H1 (cell line): ENCODE measurements at regions of chr3 and their contacts with region 1.

Region 1: DNA sequence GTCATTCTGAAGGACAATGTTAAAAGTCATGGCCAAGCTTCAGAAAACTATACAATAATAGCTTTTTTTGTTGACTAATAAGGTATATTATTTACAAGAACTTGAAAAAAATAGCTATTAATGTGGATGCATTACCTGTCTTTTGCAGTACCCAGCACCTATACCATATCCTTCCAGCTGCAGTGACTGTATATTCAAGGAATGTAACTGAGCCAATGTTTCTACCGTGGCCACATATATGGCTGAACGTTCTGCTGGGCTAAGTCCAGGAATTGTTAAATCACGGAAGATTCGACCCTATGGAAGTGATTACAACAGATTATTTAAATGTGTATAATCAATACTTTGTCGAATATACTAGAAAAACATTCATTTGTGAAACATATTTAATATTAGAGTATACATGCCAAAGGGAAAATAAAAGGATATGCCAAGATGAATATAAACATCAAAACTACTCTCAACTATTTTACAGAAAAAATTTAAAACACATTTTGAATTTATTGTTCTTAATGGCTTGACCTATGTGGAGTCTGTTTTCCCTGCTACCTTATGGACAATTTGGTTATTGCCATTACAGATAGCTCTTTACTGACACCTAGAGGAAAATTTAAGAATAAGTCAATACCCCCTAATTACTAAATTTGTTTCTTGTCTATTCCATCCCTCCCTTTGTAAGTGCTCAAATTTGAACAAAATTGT is 17.6 kb downstream of the ACAD11 start:
- DNase-seq: no peak
- H3K4me3 ChIP-seq: no peak overlapping the region
- H3K27ac ChIP-seq: no peak overlapping the region
- H3K4me1 ChIP-seq: no peaks in the 10 kb centered on the region
- H3K27me3 ChIP-seq: no peaks in the 10 kb centered on the region
- CTCF ChIP-seq: peak in 2 of 3 experiments; percentile 43 to 50; a peak in 2 of 4 replicates
- EP300 ChIP-seq: no peak
- POLR2A ChIP-seq: no peak
- RAD21 ChIP-seq: peak; percentile 67 to 73

Region 2: GRCh38 chr3:132535575-132536441 is 106.2 kb before region 1 on chr3:
- CTCF ChIA-PET with region 1: interaction called, 163 read pairs
- POLR2A ChIA-PET with region 1: interaction called, 3 read pairs
- DNase-seq: peak; percentile 17 to 67
- H3K4me3 ChIP-seq: no peak overlapping the region
- H3K27ac ChIP-seq: no peak overlapping the region
- H3K4me1 ChIP-seq: no peaks in the 10 kb centered on the region
- H3K27me3 ChIP-seq: no peaks in the 10 kb centered on the region
- CTCF ChIP-seq: peak in 2 of 3 experiments; percentile 65 to 66; a peak in 3 of 4 replicates
- EP300 ChIP-seq: no peak
- POLR2A ChIP-seq: no peak
- RAD21 ChIP-seq: peak; percentile 69 to 70

Region 3: GRCh38 chr3:132549890-132550578 is 92.0 kb before region 1 on chr3:
- CTCF ChIA-PET with region 1: interaction called, 30 read pairs
- POLR2A ChIA-PET with region 1: no interaction called
- DNase-seq: no peak
- H3K4me3 ChIP-seq: no peak overlapping the region
- H3K27ac ChIP-seq: no peak overlapping the region
- H3K4me1 ChIP-seq: peaks cover 0 to 12% (median 3%) of the 10 kb centered on the region in 4 experiments; a peak in 3 of 7 replicates
- H3K27me3 ChIP-seq: no peaks in the 10 kb centered on the region
- CTCF ChIP-seq: no peak
- EP300 ChIP-seq: no peak
- POLR2A ChIP-seq: no peak
- RAD21 ChIP-seq: no peak

Region 4: DNA sequence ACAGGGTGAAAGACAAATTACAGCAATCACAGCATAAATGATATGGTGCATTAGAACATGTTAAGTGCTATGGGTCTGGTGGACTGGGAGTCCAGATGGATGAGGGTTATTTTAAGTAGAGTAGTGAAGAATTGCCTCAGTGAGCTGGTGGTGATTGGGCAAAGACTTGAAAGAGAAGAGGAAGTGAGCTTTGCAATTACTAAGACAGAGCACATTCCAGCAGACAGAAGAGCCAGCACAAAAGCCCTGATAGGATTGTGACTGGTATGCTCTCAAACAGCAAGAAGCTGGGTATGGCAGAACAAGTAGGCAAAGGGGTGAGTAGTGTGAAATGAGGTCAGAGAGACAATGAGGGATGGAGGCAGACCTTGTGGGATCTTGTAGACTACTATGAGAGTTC is 47.0 kb before region 1 on chr3:
- CTCF ChIA-PET with region 1: interaction called, 12 read pairs
- POLR2A ChIA-PET with region 1: no interaction called
- DNase-seq: no peak
- H3K4me3 ChIP-seq: no peak overlapping the region
- H3K27ac ChIP-seq: no peak overlapping the region
- H3K4me1 ChIP-seq: no peaks in the 10 kb centered on the region; a peak in 1 of 7 replicates
- H3K27me3 ChIP-seq: no peaks in the 10 kb centered on the region
- CTCF ChIP-seq: no peak
- EP300 ChIP-seq: no peak
- POLR2A ChIP-seq: no peak
- RAD21 ChIP-seq: no peak

Region 5: GRCh38 chr3:132629928-132630327 is 12.1 kb before region 1 on chr3:
- CTCF ChIA-PET with region 1: interaction called, 19 read pairs
- POLR2A ChIA-PET with region 1: no interaction called
- DNase-seq: no peak
- H3K4me3 ChIP-seq: no peak overlapping the region
- H3K27ac ChIP-seq: no peak overlapping the region
- H3K4me1 ChIP-seq: no peaks in the 10 kb centered on the region
- H3K27me3 ChIP-seq: no peaks in the 10 kb centered on the region
- CTCF ChIP-seq: no peak
- EP300 ChIP-seq: no peak
- POLR2A ChIP-seq: no peak
- RAD21 ChIP-seq: no peak

Region 6: GRCh38 chr3:132652640-132653270 is 10.8 kb after region 1 on chr3:
- CTCF ChIA-PET with region 1: interaction called, 23 read pairs
- POLR2A ChIA-PET with region 1: no interaction called
- DNase-seq: no peak
- H3K4me3 ChIP-seq: no peak overlapping the region
- H3K27ac ChIP-seq: no peak overlapping the region
- H3K4me1 ChIP-seq: no peaks in the 10 kb centered on the region
- H3K27me3 ChIP-seq: no peaks in the 10 kb centered on the region
- CTCF ChIP-seq: no peak
- EP300 ChIP-seq: no peak
- POLR2A ChIP-seq: no peak
- RAD21 ChIP-seq: no peak

Region 7: GRCh38 chr3:132964266-132964665 is 322.3 kb after region 1 on chr3:
- CTCF ChIA-PET with region 1: no interaction called
- POLR2A ChIA-PET with region 1: no interaction called
- DNase-seq: no peak
- H3K4me3 ChIP-seq: no peak overlapping the region
- H3K27ac ChIP-seq: no peak overlapping the region
- H3K4me1 ChIP-seq: no peaks in the 10 kb centered on the region
- H3K27me3 ChIP-seq: no peaks in the 10 kb centered on the region
- CTCF ChIP-seq: no peak
- EP300 ChIP-seq: no peak
- POLR2A ChIP-seq: no peak
- RAD21 ChIP-seq: no peak